ENCODE measurements at regions of chr11 and their contacts with region 1.

Region 1: GRCh38 chr11:74449369-74449931 is 17.9 kb downstream of the KCNE3 start:
- DNase-seq: peak; percentile 28
- ATAC-seq: peak; percentile 96
- H3K4me3 ChIP-seq: no peak overlapping the region
- H3K27ac ChIP-seq: no peak overlapping the region
- H3K4me1 ChIP-seq: peaks cover 3% of the 10 kb centered on the region
- H3K27me3 ChIP-seq: no peaks in the 10 kb centered on the region
- CTCF ChIP-seq: peak; percentile 67 to 83 (median 69)
- EP300 ChIP-seq: no peak
- POLR2A ChIP-seq: no peak
- RAD21 ChIP-seq: peak; percentile 89

Region 2: DNA sequence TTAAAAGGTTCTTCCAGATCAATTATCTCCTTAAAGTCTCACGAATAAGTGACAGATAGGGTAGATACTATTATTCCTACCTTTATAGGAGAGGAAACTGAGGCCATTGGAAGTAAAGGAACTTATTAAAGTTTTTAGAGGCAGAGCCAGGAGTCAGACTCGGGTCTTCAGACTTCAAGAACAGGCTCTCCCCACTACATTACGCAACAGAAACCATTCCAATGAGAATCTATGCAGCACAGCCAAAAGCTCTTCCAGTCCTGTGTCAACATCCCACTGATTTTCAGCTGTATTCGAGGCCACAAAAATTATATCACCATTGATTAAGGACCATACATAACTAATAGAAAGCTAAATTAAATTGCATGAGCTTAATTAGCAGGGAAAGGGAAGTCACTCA is 995.9 kb before region 1 on chr11:
- CTCF ChIA-PET with region 1: no interaction called
- POLR2A ChIA-PET with region 1: no interaction called
- RAD21 ChIA-PET with region 1: no interaction called
- SMC1A ChIA-PET with region 1: no interaction called
- in situ Hi-C with region 1: no loop called
- intact Hi-C with region 1: no loop called
- DNase-seq: no peak
- ATAC-seq: no peak
- H3K4me3 ChIP-seq: no peak overlapping the region
- H3K27ac ChIP-seq: no peak overlapping the region
- H3K4me1 ChIP-seq: no peaks in the 10 kb centered on the region
- H3K27me3 ChIP-seq: no peaks in the 10 kb centered on the region
- CTCF ChIP-seq: no peak
- EP300 ChIP-seq: no peak
- POLR2A ChIP-seq: no peak
- RAD21 ChIP-seq: no peak

Region 3: DNA sequence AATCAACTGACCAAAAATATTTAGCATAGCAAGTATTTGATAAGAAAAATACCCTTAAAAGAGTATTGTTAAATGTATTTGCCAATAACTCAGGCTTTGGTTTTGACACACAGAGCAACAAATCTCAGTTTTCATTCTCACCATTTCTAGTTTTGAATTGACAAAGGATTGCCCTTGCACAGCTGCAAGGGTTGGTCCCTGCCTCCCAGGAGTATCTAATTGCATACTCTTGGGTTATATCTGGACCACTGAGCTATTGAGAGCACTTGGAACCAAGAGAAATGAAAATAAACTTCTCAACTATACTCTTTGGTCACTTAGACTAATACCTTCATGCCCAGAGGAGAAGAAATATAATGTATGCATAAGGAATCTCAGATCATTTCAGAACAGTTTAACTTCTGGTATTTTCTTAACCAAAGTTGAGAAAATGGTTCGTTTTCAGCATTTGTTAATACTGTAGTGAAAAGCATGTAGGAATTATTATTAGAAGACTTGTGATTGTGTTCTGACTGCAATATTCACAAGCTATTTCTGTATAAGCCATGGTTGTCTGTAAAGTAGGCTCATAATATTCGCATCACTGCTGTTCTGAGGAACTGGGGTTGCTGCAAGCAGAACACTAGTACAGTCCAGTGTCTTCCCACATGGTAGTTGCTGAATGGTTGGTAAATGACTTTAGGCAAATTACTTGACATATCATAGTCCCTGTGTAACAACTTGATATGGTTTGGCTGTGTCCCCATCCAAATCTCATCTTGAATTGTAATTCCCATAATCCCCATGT is 286.6 kb before region 1 on chr11:
- CTCF ChIA-PET with region 1: no interaction called
- POLR2A ChIA-PET with region 1: no interaction called
- RAD21 ChIA-PET with region 1: no interaction called
- SMC1A ChIA-PET with region 1: no interaction called
- in situ Hi-C with region 1: no loop called
- intact Hi-C with region 1: no loop called
- DNase-seq: peak; percentile 26
- ATAC-seq: peak; percentile 95
- H3K4me3 ChIP-seq: no peak overlapping the region; the same call in 1 of the 2 replicates
- H3K27ac ChIP-seq: peak overlapping the region; percentile 8; the same call in 1 of the 2 replicates
- H3K4me1 ChIP-seq: peaks cover 10% of the 10 kb centered on the region; the same call in 1 of the 2 replicates
- H3K27me3 ChIP-seq: no peaks in the 10 kb centered on the region
- CTCF ChIP-seq: no peak
- EP300 ChIP-seq: peak in 1 of 2 experiments; percentile 24; a peak in 1 of 4 replicates
- POLR2A ChIP-seq: no peak
- RAD21 ChIP-seq: no peak

Region 4: GRCh38 chr11:74255741-74256369 is 193.6 kb before region 1 on chr11:
- CTCF ChIA-PET with region 1: interaction called, 83 read pairs
- POLR2A ChIA-PET with region 1: no interaction called
- RAD21 ChIA-PET with region 1: interaction called, 27 read pairs
- SMC1A ChIA-PET with region 1: interaction called, 30 read pairs
- in situ Hi-C with region 1: no loop called
- intact Hi-C with region 1: loop called (anchors 1 kb)
- DNase-seq: no peak
- ATAC-seq: peak; percentile 80
- H3K4me3 ChIP-seq: no peak overlapping the region
- H3K27ac ChIP-seq: no peak overlapping the region
- H3K4me1 ChIP-seq: no peaks in the 10 kb centered on the region
- H3K27me3 ChIP-seq: no peaks in the 10 kb centered on the region
- CTCF ChIP-seq: peak; percentile 87 to 95 (median 89)
- EP300 ChIP-seq: no peak
- POLR2A ChIP-seq: no peak
- RAD21 ChIP-seq: peak; percentile 71

Region 5: DNA sequence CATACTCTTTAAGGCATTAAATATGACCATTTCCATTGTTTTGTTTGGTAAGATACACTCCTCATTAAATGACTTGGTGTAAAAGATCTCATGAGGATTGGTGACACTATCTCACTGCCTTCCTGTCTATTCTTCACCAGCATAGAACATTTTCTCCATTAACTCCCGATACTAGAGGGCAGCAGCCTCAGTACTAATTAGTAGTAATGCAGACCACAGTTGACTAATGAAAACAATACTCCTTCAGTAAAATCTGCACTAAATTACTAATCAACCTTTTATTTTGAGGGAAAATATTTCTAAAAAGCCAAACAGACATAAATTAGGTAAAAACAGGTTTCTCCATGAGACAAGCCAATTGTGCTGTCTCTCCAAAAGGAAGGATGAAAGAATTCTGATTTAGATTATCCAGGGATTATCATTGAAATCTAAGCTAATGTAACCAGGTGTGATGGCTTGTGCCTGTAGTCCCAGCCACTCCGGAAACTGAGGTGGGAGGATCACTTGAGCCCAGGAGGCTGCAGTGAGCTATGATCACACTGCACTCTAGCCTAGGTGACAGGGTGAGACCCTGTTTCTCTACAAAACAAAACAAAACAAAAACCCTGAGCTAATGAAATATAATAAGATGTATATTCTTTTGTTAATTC is 60.6 kb before region 1 on chr11:
- CTCF ChIA-PET with region 1: interaction called, 262 read pairs
- POLR2A ChIA-PET with region 1: interaction called, 7 read pairs
- RAD21 ChIA-PET with region 1: interaction called, 77 read pairs
- SMC1A ChIA-PET with region 1: interaction called, 55 read pairs
- in situ Hi-C with region 1: loop called (anchors 5 kb)
- intact Hi-C with region 1: loop called (anchors 1 kb)
- DNase-seq: peak; percentile 8
- ATAC-seq: peak; percentile 95
- H3K4me3 ChIP-seq: no peak overlapping the region
- H3K27ac ChIP-seq: no peak overlapping the region
- H3K4me1 ChIP-seq: no peaks in the 10 kb centered on the region
- H3K27me3 ChIP-seq: no peaks in the 10 kb centered on the region
- CTCF ChIP-seq: peak; percentile 66 to 73 (median 69); a peak in 5 of 6 replicates
- EP300 ChIP-seq: no peak
- POLR2A ChIP-seq: no peak
- RAD21 ChIP-seq: peak; percentile 73

Region 6: DNA sequence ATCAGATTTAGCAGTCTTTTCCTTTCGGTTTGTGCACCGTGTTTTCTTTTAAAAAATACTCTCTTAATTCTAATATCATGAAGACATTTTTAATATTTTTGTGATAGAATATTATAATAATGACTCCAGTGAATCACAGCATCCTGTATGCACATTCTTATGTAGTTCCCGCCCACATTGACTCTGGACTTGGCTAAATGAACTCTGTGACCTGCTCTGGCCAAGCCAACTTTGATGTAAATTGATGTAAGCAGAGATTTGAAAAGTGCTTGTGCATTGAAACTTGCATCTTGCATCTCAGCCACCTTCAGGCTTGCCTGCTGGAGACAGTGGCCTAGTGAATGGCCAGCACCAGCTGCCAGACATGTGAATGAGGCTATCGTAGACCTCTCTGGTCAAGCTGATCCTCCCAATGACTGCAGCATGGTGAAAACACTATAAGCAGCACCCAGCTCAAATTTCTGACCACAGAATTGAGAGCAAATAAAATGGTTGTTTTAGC is 22.0 kb before region 1 on chr11:
- CTCF ChIA-PET with region 1: interaction called, 12 read pairs
- POLR2A ChIA-PET with region 1: no interaction called
- RAD21 ChIA-PET with region 1: interaction called, 4 read pairs
- SMC1A ChIA-PET with region 1: no interaction called
- in situ Hi-C with region 1: no loop called
- intact Hi-C with region 1: no loop called
- DNase-seq: no peak
- ATAC-seq: no peak
- H3K4me3 ChIP-seq: no peak overlapping the region
- H3K27ac ChIP-seq: no peak overlapping the region
- H3K4me1 ChIP-seq: no peaks in the 10 kb centered on the region
- H3K27me3 ChIP-seq: no peaks in the 10 kb centered on the region
- CTCF ChIP-seq: no peak
- EP300 ChIP-seq: no peak
- POLR2A ChIP-seq: no peak
- RAD21 ChIP-seq: no peak

Region 7: DNA sequence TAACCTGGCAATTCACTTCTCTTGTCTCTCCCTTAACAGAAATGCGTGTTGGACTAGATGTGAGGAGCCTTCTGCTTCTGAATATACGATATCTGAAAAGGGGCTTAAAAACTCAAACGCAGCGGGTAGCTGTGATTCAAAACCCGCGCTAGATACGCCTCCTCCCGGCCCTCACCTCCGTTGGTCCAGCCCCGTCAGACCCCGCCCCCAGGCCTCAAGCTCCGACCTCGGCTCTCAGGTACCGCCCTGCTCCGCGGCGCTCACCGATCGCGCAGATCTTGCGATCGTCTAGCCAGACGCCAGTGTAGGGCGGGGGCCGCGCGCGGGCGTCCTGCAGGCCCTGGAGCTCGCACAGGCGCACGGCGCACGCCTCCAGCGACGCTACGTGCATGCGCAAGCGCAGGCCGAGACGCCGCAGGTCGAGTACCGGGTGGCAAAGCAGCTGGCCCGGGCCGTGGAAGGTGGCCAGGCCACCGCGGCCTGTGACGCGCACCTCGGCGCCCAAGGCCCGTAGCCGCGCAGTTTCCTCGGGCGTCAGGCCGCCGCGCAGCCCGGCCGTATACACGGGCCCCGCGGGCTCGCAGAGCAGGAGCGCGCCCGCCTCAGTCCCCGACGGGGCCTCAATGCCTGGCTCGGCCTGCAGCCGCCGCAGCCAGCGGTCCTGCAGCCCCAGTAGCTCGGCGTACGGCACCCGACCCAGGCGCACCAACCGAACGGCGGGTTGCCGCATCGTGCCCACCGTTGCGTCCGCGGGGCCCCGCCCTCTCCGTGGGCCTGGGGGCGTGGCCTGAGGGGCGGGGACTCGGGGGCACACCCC is 43.7 kb after region 1 on chr11 and contains the start of gene LIPT2:
- CTCF ChIA-PET with region 1: interaction called, 11 read pairs
- POLR2A ChIA-PET with region 1: no interaction called
- RAD21 ChIA-PET with region 1: interaction called, 6 read pairs
- SMC1A ChIA-PET with region 1: interaction called, 4 read pairs
- in situ Hi-C with region 1: no loop called
- intact Hi-C with region 1: no loop called
- DNase-seq: peak; percentile 90
- ATAC-seq: peak; percentile 100
- H3K4me3 ChIP-seq: peak within 1 kb of the TSS; percentile 64
- H3K27ac ChIP-seq: peak within 1 kb of the TSS; percentile 62
- H3K4me1 ChIP-seq: no peaks in the 10 kb centered on the region; the same call in 1 of the 2 replicates
- H3K27me3 ChIP-seq: no peaks in the 10 kb centered on the region; a peak in 1 of 4 replicates
- CTCF ChIP-seq: no peak
- EP300 ChIP-seq: no peak
- POLR2A ChIP-seq: peak; percentile 94
- RAD21 ChIP-seq: no peak
- polyA plus RNA-seq, gene LIPT2: 0.69 to 2.1 TPM

Region 8: DNA sequence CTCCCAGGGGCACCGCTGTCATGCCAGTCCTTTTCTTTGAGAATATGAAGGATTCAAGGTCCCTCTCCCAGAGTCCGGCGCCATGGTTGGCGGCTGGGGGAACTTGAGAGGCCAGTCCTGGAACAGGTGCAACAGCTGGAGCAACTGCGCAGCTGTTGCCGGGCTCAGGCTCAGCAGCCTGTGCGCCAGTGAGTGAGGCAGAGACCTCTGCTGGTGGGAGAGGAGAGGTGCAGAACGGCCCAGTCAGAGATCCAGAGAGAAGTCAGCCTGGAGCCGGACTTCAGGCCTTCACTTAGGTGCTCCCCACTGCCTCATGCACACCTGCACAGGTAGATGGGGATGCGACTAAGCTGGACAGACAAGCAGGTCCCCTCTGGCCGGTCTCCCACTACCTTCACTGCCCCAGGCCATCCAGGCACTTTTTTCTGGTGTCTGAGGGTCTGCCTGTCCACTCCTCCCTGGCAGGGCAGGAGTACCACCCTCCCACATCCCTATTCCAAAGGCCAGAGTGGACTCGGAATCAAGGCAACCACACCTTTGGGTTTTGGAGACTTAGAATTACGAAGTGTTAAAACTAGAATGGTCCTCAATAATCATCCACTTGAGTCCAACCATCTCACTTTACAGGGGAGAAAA is 277.2 kb after region 1 on chr11:
- CTCF ChIA-PET with region 1: interaction called, 12 read pairs
- POLR2A ChIA-PET with region 1: no interaction called
- RAD21 ChIA-PET with region 1: interaction called, 14 read pairs
- SMC1A ChIA-PET with region 1: interaction called, 6 read pairs
- in situ Hi-C with region 1: loop called (anchors 10 kb)
- intact Hi-C with region 1: no loop called
- DNase-seq: no peak
- ATAC-seq: peak; percentile 100
- H3K4me3 ChIP-seq: no peak overlapping the region
- H3K27ac ChIP-seq: no peak overlapping the region
- H3K4me1 ChIP-seq: no peaks in the 10 kb centered on the region
- H3K27me3 ChIP-seq: peaks cover 10 to 13% of the 10 kb centered on the region in 2 experiments
- CTCF ChIP-seq: peak; percentile 93 to 98 (median 93)
- EP300 ChIP-seq: no peak
- POLR2A ChIP-seq: no peak
- RAD21 ChIP-seq: peak; percentile 86

Region 9: GRCh38 chr11:75280227-75280701 is 830.8 kb after region 1 on chr11:
- CTCF ChIA-PET with region 1: no interaction called
- POLR2A ChIA-PET with region 1: no interaction called
- RAD21 ChIA-PET with region 1: no interaction called
- SMC1A ChIA-PET with region 1: no interaction called
- in situ Hi-C with region 1: no loop called
- intact Hi-C with region 1: no loop called
- DNase-seq: peak; percentile 16
- ATAC-seq: peak; percentile 98
- H3K4me3 ChIP-seq: no peak overlapping the region
- H3K27ac ChIP-seq: no peak overlapping the region
- H3K4me1 ChIP-seq: no peaks in the 10 kb centered on the region
- H3K27me3 ChIP-seq: no peaks in the 10 kb centered on the region; a peak in 1 of 4 replicates
- CTCF ChIP-seq: peak; percentile 93 to 96 (median 93)
- EP300 ChIP-seq: no peak
- POLR2A ChIP-seq: no peak
- RAD21 ChIP-seq: peak; percentile 90